Activated T-helper 2 cell treated with anti-CD3 and anti-CD28 coated beads, Interferon-gamma antibody, Interleukin-2, Interleukin-4, amounts not matched to agents 10 μg/mL and 5 μg/mL and 100 μg/mL, durations not matched to agents 14 hours and 24 hours and 36 hours (primary cell): ENCODE measurements at regions of chr1 and their contacts with region 1.

Region 1: GRCh38 chr1:3453203-3453761 is 1.2 kb upstream of the ARHGEF16 start:
- DNase-seq: peak; percentile 57
- H3K4me3 Mint-ChIP-seq: no peak overlapping the region
- H3K27ac Mint-ChIP-seq: no peak overlapping the region
- H3K4me1 Mint-ChIP-seq: no peaks in the 10 kb centered on the region
- H3K27me3 Mint-ChIP-seq: peaks cover 11% of the 10 kb centered on the region

Region 2: GRCh38 chr1:3306583-3307291 is 146.5 kb before region 1 on chr1:
- intact Hi-C with region 1: no loop called
- DNase-seq: no peak
- H3K4me3 Mint-ChIP-seq: no peak overlapping the region
- H3K27ac Mint-ChIP-seq: no peak overlapping the region
- H3K4me1 Mint-ChIP-seq: no peaks in the 10 kb centered on the region
- H3K27me3 Mint-ChIP-seq: no peaks in the 10 kb centered on the region

Region 3: DNA sequence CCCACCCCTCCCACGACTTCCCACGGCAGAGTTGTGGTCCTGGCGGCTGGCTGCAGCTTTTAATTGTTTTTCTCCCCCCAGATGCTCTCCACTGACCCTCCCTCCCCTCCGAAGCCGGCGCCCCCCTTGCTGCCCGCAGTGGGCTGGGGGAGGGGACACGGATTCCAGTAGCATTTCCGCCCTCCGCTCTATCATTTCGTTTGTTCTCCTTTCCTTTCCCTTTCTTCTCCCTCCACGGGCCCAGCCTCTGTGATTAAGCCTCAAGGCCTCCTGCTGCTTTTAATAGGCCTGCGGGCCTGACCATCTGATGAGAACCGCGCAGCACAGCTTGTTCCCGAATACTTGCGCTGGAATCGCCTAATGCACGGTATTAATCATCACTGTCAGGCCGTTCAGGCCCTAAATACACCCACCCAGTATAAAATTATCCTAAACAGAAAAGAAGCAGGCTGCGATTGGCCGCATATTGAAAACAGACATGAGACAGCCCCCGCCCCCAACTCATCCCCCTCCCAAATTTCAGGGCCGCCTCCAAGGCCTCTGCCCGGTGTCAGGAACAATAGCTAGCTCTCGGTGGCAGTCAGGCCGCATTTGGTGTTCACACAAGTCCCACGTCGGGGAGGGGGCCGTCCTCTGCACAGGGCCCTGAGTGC is 100.9 kb before region 1 on chr1:
- intact Hi-C with region 1: no loop called
- DNase-seq: no peak
- H3K4me3 Mint-ChIP-seq: no peak overlapping the region
- H3K27ac Mint-ChIP-seq: no peak overlapping the region
- H3K4me1 Mint-ChIP-seq: no peaks in the 10 kb centered on the region
- H3K27me3 Mint-ChIP-seq: no peaks in the 10 kb centered on the region

Region 4: DNA sequence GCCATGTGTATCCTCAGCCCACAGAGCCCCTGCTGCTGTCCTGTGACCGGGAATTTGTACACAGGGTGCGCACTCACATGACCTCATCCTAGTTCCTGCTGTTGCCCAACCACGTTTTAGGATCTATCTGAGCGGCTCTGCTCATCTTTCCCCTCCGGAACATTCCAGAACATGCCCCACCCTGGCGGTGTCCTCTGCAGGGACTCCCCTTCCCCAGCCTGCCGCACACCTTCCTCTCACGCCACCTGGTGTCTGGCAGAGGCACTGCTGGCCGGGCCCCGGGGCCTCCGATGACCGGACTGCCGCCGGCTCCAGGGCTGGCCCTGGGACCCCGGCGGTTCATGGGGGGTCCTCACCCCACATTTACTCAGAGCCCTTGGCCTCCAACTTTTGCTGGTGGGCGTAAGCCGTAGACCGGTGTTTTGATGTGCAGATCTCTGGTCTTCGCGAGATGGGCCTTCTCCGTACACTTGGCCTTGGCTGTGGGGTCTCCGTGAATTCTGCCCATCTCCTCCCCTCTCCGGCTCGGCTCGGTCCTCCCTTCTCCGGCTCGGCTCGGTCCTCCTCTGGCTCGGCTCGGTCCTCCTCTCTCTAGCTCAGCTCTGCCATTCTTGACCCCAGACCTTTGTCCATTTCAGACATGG is 30.6 kb after region 1 on chr1:
- intact Hi-C with region 1: loop called (anchors 2 kb)
- DNase-seq: peak; percentile 22
- H3K4me3 Mint-ChIP-seq: no peak overlapping the region
- H3K27ac Mint-ChIP-seq: no peak overlapping the region
- H3K4me1 Mint-ChIP-seq: no peaks in the 10 kb centered on the region
- H3K27me3 Mint-ChIP-seq: no peaks in the 10 kb centered on the region